ENCODE measurements at regions of chr3 and their contacts with region 1.

Region 1: DNA sequence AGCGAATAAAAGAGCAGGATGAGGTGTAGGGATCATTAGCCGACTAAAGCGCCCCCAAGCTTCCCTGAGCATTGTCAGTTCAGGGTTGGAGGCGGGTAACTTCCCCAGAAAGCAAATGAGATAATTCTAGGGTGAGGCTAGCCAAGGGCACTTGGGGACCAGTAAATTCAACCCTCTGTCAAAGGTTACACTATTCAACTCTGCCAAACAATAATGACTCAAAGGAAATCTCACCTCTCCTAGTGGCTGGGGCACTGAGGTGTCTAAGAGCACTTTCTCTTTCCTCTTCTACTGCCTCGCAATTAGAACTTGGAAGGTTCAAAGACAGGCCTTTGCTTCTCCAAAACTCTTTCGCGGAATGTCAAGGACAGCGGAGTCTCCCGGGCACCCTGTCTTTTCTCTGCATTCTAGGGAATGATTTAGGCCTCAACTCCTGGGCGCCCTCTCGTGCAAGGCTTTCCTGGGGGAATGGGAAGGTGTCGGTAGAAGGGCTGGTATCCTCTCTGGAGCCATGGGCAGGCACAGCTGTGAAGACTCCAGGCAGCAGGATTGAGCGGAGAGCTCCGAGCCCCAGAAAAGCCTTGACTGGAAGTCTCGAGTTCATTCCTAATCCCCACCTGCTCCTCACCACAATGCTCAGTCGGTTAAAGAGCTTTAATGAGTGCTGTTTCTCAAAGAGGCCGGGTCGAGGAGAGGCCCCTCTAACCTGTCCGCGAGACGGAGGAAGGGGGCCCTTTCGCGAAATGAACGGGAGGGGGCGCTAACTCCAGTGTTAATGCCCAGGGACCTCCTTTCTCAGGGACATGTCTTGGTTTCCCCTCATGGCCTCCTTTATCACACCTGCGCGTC is 21.9 kb downstream of the ZIC4 start:
- DNase-seq: peak; percentile 27
- ATAC-seq: no peak
- H3K4me3 Mint-ChIP-seq: no peak overlapping the region
- H3K27ac Mint-ChIP-seq: no peak overlapping the region
- H3K4me1 Mint-ChIP-seq: no peaks in the 10 kb centered on the region
- H3K27me3 Mint-ChIP-seq: peaks cover 82% of the 10 kb centered on the region
- CTCF ChIP-seq: no peak

Region 2: GRCh38 chr3:147538034-147538433 is 153.6 kb after region 1 on chr3:
- CTCF ChIA-PET with region 1: no interaction called
- POLR2A ChIA-PET with region 1: no interaction called
- intact Hi-C with region 1: loop called (anchors 5 kb)
- DNase-seq: no peak
- ATAC-seq: no peak
- H3K4me3 Mint-ChIP-seq: no peak overlapping the region
- H3K27ac Mint-ChIP-seq: no peak overlapping the region
- H3K4me1 Mint-ChIP-seq: no peaks in the 10 kb centered on the region
- H3K27me3 Mint-ChIP-seq: no peaks in the 10 kb centered on the region
- CTCF ChIP-seq: no peak

Region 3: GRCh38 chr3:147651107-147651778 is 266.8 kb after region 1 on chr3:
- CTCF ChIA-PET with region 1: no interaction called
- POLR2A ChIA-PET with region 1: no interaction called
- intact Hi-C with region 1: no loop called
- DNase-seq: no peak
- ATAC-seq: no peak
- H3K4me3 Mint-ChIP-seq: no peak overlapping the region
- H3K27ac Mint-ChIP-seq: no peak overlapping the region
- H3K4me1 Mint-ChIP-seq: no peaks in the 10 kb centered on the region
- H3K27me3 Mint-ChIP-seq: no peaks in the 10 kb centered on the region
- CTCF ChIP-seq: no peak

Measured in activated CD8-positive, alpha-beta T cell treated with anti-CD3 and anti-CD28 coated beads for 36 hours (primary cell).